ENCODE measurements at regions of chr3 and their contacts with region 1.

Region 1: GRCh38 chr3:27632431-27633223 is 89.5 kb downstream of the EOMES start:
- DNase-seq: no peak
- H3K4me3 ChIP-seq: peak overlapping the region; percentile 49
- H3K27me3 ChIP-seq: no peaks in the 10 kb centered on the region
- CTCF ChIP-seq: no peak

Region 2: GRCh38 chr3:27479806-27480543 is 152.7 kb before region 1 on chr3:
- CTCF ChIA-PET with region 1: no interaction called
- POLR2A ChIA-PET with region 1: interaction called, 19 read pairs
- DNase-seq: no peak
- H3K4me3 ChIP-seq: no peak overlapping the region
- H3K27me3 ChIP-seq: no peaks in the 10 kb centered on the region
- CTCF ChIP-seq: no peak